Transverse colon (tissue), 4 donors: ENCODE measurements at regions of chr10 and their contacts with region 1.

Region 1: GRCh38 chr10:102665904-102666509 is 21.7 kb downstream of the TRIM8 start:
- DNase-seq: no peak
- H3K4me3 ChIP-seq: no peak overlapping the region
- H3K27ac ChIP-seq: no peak overlapping the region
- H3K4me1 ChIP-seq: peaks cover 13 to 19% (median 13%) of the 10 kb centered on the region in 4 donors
- H3K27me3 ChIP-seq: no peaks in the 10 kb centered on the region
- CTCF ChIP-seq: no peak
- EP300 ChIP-seq: no peak
- POLR2A ChIP-seq: no peak

Region 2: GRCh38 chr10:102701272-102701671 is 35.3 kb after region 1 on chr10:
- in situ Hi-C with region 1: no loop called
- intact Hi-C with region 1: loop called (anchors 1 kb)
- DNase-seq: no peak
- H3K4me3 ChIP-seq: no peak overlapping the region
- H3K27ac ChIP-seq: no peak overlapping the region
- H3K4me1 ChIP-seq: no peaks in the 10 kb centered on the region
- H3K27me3 ChIP-seq: no peaks in the 10 kb centered on the region
- CTCF ChIP-seq: no peak
- EP300 ChIP-seq: no peak
- POLR2A ChIP-seq: no peak